ENCODE measurements at regions of chr20 and their contacts with region 1.

Region 1: DNA sequence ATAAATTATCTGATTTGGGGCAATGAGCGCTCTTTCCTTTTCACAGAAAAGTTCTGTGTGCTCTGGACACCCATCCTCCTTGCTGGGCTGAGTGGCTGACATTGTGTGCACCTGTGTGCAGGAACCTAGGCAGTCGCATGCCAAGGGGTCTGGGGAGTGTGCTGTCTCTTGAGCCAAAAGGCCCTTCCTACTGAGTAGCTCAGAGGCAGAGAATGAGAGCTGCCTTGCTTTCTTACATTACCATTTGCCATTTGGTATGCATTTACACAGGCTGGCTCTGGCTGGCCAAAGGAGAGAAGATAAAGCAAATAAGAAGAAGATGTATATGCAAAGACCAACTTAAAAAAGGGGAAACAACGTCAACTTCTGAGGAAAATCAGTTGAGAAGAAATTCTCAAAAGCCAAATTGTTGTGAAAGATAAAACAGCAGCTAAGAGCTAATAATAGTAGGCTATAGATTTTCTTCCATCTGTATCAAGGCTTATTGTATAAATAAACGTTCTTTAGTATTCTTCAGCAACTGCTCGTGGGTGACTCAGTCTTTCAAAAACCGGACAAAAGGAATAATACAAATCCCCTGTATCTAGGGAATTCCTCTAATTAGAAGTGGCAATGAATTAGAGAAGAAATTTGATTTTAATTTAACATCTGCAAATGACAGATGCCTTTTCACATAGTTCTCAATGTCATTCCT is 121.9 kb downstream of the INSM1 start:
- DNase-seq: no peak
- H3K4me3 Mint-ChIP-seq: peak overlapping the region; percentile 63
- H3K27ac Mint-ChIP-seq: peak overlapping the region; percentile 85
- H3K4me1 Mint-ChIP-seq: peaks cover 63% of the 10 kb centered on the region
- H3K27me3 Mint-ChIP-seq: no peaks in the 10 kb centered on the region

Region 2: GRCh38 chr20:20052074-20052970 is 437.5 kb before region 1 on chr20 and contains the starts of genes CFAP61 and CRNKL1:
- intact Hi-C with region 1: loop called (anchors 10 kb)
- DNase-seq: peak; percentile 95
- H3K4me3 Mint-ChIP-seq: peak within 1 kb of the TSS; percentile 97
- H3K27ac Mint-ChIP-seq: peak within 1 kb of the TSS; percentile 96
- H3K4me1 Mint-ChIP-seq: peaks cover 13% of the 10 kb centered on the region
- H3K27me3 Mint-ChIP-seq: peaks cover 6% of the 10 kb centered on the region
- total RNA-seq, gene CFAP61: not detected in 2 replicates
- total RNA-seq, gene CRNKL1: 23.9 and 24.1 TPM in 2 replicates

Region 3: GRCh38 chr20:20407891-20408805 is 81.6 kb before region 1 on chr20:
- intact Hi-C with region 1: loop called (anchors 1 kb)
- DNase-seq: no peak
- H3K4me3 Mint-ChIP-seq: no peak overlapping the region
- H3K27ac Mint-ChIP-seq: no peak overlapping the region
- H3K4me1 Mint-ChIP-seq: peaks cover 8% of the 10 kb centered on the region
- H3K27me3 Mint-ChIP-seq: no peaks in the 10 kb centered on the region

Region 4: DNA sequence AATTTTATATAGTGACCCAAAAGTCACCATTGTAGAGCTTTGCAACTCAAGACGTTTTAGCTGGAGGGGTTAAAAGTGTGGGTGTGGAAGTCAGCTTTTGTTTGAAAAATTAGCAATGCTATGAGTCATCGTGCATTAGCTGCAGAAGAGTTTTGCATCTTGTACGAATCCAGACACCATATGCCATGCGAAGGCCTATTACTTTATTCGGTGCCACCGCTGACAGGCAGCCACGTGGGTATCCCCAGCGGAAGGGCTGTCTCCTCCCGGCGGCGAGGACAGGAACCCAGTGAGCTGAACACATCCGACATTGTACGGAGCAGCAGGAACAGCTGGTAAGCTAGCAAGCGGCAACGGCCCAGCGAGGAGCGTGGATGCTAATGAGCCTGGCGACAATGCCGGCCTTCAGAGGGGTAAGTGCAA is 37.5 kb before region 1 on chr20:
- intact Hi-C with region 1: loop called (anchors 1 kb)
- DNase-seq: peak; percentile 43
- H3K4me3 Mint-ChIP-seq: peak overlapping the region; percentile 89
- H3K27ac Mint-ChIP-seq: peak overlapping the region; percentile 91
- H3K4me1 Mint-ChIP-seq: peaks cover 54% of the 10 kb centered on the region
- H3K27me3 Mint-ChIP-seq: no peaks in the 10 kb centered on the region

Region 5: DNA sequence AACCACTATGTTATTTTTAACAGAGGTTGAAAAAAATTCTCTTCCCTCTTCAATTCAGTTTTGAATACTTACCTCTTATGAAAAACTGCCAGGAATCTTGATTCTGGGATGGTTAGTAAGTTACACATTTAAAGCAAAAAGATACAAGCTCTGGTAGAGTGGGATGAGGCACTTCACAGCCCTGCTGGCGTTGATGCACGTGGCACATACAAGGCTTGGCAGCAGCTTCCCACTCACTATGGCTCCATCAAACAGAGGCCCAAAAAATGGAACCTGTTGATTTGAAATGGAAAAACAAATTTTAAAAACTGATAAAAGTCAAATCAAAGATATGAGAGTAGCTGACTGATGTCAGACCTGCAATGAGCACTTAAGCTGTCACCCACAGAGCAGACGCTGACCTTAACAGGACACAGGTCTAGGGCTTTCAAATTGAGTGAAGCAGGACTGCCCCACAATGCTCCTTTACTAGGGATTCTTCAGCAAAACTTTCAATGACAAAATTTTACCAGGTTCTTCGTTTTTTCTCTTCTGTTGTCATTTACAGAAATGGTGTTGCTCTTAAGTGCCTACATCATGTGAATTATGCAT is 17.0 kb before region 1 on chr20:
- intact Hi-C with region 1: no loop called
- DNase-seq: no peak
- H3K4me3 Mint-ChIP-seq: no peak overlapping the region
- H3K27ac Mint-ChIP-seq: no peak overlapping the region
- H3K4me1 Mint-ChIP-seq: peaks cover 6% of the 10 kb centered on the region
- H3K27me3 Mint-ChIP-seq: no peaks in the 10 kb centered on the region

Region 6: GRCh38 chr20:20505554-20505953 is 15.8 kb after region 1 on chr20:
- intact Hi-C with region 1: loop called (anchors 1 kb)
- DNase-seq: no peak
- H3K4me3 Mint-ChIP-seq: peak overlapping the region; percentile 28
- H3K27ac Mint-ChIP-seq: no peak overlapping the region
- H3K4me1 Mint-ChIP-seq: peaks cover 39% of the 10 kb centered on the region
- H3K27me3 Mint-ChIP-seq: no peaks in the 10 kb centered on the region

Region 7: GRCh38 chr20:20568604-20569205 is 78.9 kb after region 1 on chr20:
- intact Hi-C with region 1: loop called (anchors 1 kb)
- DNase-seq: no peak
- H3K4me3 Mint-ChIP-seq: no peak overlapping the region
- H3K27ac Mint-ChIP-seq: no peak overlapping the region
- H3K4me1 Mint-ChIP-seq: peaks cover 5% of the 10 kb centered on the region
- H3K27me3 Mint-ChIP-seq: no peaks in the 10 kb centered on the region

Region 8: DNA sequence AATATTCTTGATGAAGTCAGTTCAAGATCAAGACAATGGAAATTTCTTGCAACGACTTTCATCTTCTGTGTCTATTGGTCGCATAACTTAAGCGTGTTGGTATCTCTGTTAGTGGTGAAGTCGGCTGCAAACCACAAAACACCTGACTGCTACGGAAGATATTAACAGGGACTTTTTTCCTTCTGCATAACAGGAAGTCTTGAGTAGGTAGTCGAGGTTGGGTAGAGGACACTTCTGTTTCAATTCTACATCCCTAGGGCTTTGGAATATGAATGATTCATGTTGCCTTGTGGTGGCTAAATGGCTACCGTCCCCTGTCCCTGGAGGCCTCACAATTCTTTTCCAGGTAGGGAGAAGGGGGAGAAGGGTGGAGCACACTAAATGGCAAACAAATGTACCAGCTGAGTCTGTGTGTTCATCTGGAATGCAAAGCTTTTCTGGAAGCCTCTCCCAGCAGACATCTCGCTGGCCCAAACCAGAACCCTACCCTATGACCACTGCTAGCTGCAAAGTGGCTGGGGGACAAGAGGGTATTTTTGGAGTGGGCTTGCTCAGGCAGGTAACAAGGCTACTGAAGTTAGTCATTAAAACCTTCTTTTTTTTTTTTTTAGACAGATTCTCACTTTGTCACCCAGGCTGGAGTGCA is 1058.7 kb after region 1 on chr20:
- intact Hi-C with region 1: loop called (anchors 2 kb)
- DNase-seq: peak; percentile 61
- H3K4me3 Mint-ChIP-seq: peak overlapping the region; percentile 47
- H3K27ac Mint-ChIP-seq: peak overlapping the region; percentile 81
- H3K4me1 Mint-ChIP-seq: peaks cover 38% of the 10 kb centered on the region
- H3K27me3 Mint-ChIP-seq: peaks cover 4% of the 10 kb centered on the region

Measured in activated T-helper 1 cell treated with anti-CD3 and anti-CD28 coated beads, Interleukin-12 subunit alpha, Interleukin-12 subunit beta, Interleukin-2, Interleukin-4 antibody, amounts not matched to agents 30 ng/mL and 10 ng/mL and 1 ng/mL, durations not matched to agents 14 hours and 24 hours and 36 hours (primary cell).